H1 (cell line): ENCODE measurements at regions of chr10 and their contacts with region 1.

Region 1: GRCh38 chr10:133139551-133140065 is 20.4 kb upstream of the KNDC1 start:
- DNase-seq: peak in 1 of 2 experiments; percentile 56
- H3K4me3 ChIP-seq: no peak overlapping the region
- H3K27ac ChIP-seq: no peak overlapping the region
- H3K4me1 ChIP-seq: peaks cover 0 to 3% (median 2%) of the 10 kb centered on the region in 4 experiments; a peak in 6 of 7 replicates
- H3K27me3 ChIP-seq: no peaks in the 10 kb centered on the region
- CTCF ChIP-seq: no peak
- EP300 ChIP-seq: no peak
- POLR2A ChIP-seq: no peak
- RAD21 ChIP-seq: no peak

Region 2: GRCh38 chr10:133151543-133151972 is 11.9 kb after region 1 on chr10:
- CTCF ChIA-PET with region 1: interaction called, 13 read pairs
- POLR2A ChIA-PET with region 1: interaction called, 3 read pairs
- DNase-seq: peak; percentile 48 to 78
- H3K4me3 ChIP-seq: peak overlapping the region in 3 of 4 experiments; percentile 6 to 33 (median 13); a peak in 3 of 8 replicates
- H3K27ac ChIP-seq: peak overlapping the region; percentile 91
- H3K4me1 ChIP-seq: peaks cover 3 to 10% (median 6%) of the 10 kb centered on the region in 4 experiments
- H3K27me3 ChIP-seq: 0 out of 7 replicates have a peak, but pooled peaks cover 0 to 2% (median 0%) of the 10 kb centered on the region in 4 experiments
- CTCF ChIP-seq: no peak
- EP300 ChIP-seq: no peak
- POLR2A ChIP-seq: peak in 1 of 2 experiments; percentile 77; a peak in 1 of 3 replicates
- RAD21 ChIP-seq: no peak

Region 3: DNA sequence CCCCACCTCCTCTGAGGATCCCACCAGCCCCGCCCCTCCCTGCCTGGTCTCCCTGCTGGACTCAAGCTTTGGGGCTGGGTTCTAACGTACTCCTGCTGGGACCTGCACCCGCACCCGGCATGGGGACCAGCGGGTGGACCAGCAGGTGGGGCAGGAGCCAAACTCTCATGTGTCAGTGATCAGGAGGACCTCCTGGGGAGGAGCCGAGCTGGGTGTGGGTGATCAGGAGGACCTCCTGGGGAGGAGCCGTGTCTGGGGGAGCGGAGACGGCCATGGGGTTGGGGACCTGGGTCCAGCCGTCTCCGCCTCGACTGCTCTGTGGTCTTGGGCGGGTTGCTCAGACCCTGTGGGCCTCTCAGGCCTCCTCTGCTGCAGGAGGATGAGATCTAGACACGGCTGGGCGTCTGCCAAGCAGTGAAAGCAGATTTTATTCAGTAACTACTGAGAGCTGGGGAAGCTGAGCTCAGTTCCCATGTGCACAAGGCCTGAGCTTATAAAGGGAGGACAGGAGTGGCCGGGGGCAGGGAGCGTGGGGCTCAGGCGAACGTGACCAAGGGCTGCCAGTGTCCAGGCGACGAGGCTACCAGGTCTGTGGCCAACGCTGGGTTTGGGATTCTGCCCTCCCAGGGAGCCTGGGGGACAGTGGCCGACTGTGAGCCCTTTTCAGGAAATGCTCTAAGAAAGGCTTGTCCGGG is 56.8 kb after region 1 on chr10:
- CTCF ChIA-PET with region 1: interaction called, 40 read pairs
- POLR2A ChIA-PET with region 1: interaction called, 6 read pairs
- DNase-seq: no peak
- H3K4me3 ChIP-seq: no peak overlapping the region
- H3K27ac ChIP-seq: no peak overlapping the region
- H3K4me1 ChIP-seq: no peaks in the 10 kb centered on the region
- H3K27me3 ChIP-seq: no peaks in the 10 kb centered on the region
- CTCF ChIP-seq: no peak
- EP300 ChIP-seq: no peak
- POLR2A ChIP-seq: no peak
- RAD21 ChIP-seq: no peak

Region 4: GRCh38 chr10:133219782-133220181 is 80.2 kb after region 1 on chr10:
- CTCF ChIA-PET with region 1: interaction called, 14 read pairs
- POLR2A ChIA-PET with region 1: no interaction called
- DNase-seq: peak; percentile 57 to 82
- H3K4me3 ChIP-seq: peak overlapping the region in 3 of 4 experiments; percentile 17 to 34 (median 29); a peak in 3 of 8 replicates
- H3K27ac ChIP-seq: no peak overlapping the region
- H3K4me1 ChIP-seq: peaks cover 0 to 15% (median 12%) of the 10 kb centered on the region in 4 experiments; a peak in 6 of 7 replicates
- H3K27me3 ChIP-seq: no peaks in the 10 kb centered on the region
- CTCF ChIP-seq: no peak
- EP300 ChIP-seq: no peak
- POLR2A ChIP-seq: no peak
- RAD21 ChIP-seq: no peak

Region 5: GRCh38 chr10:133267829-133268228 is 128.2 kb after region 1 on chr10:
- CTCF ChIA-PET with region 1: interaction called, 10 read pairs
- POLR2A ChIA-PET with region 1: interaction called, 3 read pairs
- DNase-seq: no peak
- H3K4me3 ChIP-seq: no peak overlapping the region
- H3K27ac ChIP-seq: no peak overlapping the region
- H3K4me1 ChIP-seq: peaks cover 0 to 3% (median 0%) of the 10 kb centered on the region in 4 experiments; a peak in 4 of 7 replicates
- H3K27me3 ChIP-seq: peaks cover 0 to 7% (median 3%) of the 10 kb centered on the region in 4 experiments; a peak in 5 of 7 replicates
- CTCF ChIP-seq: peak in 2 of 3 experiments; percentile 11 to 29; a peak in 3 of 4 replicates
- EP300 ChIP-seq: no peak
- POLR2A ChIP-seq: no peak
- RAD21 ChIP-seq: peak; percentile 35 to 60; a peak in 3 of 4 replicates